AG04450 (cell line): ENCODE measurements at regions of chr19 and their contacts with region 1.

Region 1: DNA sequence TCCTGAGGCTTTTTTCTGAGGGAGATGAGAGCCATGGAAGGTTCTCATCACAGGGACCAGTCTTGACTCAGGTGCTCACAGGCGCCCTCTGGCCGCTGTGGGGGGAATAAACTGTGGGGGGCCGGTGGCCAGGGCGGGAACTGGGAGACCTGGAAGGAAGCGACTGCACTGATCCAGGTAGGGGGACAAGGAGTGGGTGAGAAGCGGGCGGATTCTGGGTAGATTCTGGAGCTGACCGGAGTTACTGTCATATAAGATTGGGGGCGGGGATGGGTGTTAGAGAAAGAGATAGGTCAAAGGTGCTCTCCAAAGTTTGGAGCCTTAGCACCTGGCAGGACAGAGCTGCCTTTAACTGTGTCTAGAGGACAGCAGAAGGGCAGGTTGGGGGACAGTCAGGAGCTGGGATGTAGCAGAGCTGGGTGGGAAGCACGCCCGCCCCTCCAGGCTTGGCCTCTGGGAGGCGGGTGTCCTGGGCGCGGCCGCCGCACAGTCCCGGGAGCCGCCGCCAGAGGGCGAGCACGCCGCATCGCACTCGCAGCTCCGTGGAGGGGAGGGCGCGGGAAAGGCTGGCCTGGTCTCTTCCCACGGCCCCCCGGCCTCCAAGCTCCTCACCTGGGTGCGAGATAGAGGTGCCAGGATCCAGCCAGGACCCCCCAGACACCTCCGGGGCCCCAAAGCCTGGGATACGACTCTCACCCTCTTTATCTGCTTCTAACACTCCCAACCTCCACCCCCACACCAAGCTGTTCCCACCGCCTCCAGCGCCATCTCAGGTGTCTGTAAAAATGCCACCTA is 4.2 kb upstream of the DAND5 start:
- DNase-seq: no peak
- H3K4me3 ChIP-seq: peak overlapping the region; percentile 63
- H3K27ac ChIP-seq: no peak overlapping the region
- H3K27me3 ChIP-seq: no peaks in the 10 kb centered on the region
- CTCF ChIP-seq: peak; percentile 81

Region 2: DNA sequence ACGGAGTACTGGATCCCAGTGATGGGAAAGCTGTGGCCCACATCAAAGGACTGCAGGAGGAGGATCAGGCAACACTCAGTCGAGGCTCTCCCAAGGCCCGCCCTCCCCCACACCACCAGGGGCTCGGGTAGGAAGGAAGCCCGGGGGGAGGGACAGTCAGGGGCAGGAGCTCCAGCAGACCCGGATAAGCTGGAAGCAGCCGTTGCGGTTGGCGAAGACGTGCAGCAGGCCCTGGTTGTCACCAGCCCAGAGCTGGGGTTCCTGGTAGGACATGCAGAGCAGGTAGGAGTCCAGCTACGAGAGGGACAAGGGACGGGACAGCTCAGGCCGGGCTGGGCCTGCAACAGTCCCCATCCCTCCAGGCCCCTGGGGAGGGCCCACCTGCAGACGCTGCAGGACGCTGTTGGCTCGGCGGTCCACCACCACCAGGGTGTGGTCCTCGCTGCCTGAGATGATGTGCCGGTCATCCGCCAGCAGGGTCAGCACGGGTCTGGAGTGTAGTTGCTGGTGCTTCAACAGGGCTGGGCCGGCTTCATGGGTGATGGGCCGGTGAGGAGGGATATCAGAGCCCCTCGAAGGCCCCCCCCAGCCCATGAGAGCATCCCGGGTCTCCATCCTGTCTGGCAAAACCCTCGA is 275.5 kb before region 1 on chr19:
- CTCF ChIA-PET with region 1: no interaction called
- POLR2A ChIA-PET with region 1: no interaction called
- DNase-seq: no peak
- H3K4me3 ChIP-seq: no peak overlapping the region
- H3K27ac ChIP-seq: no peak overlapping the region
- H3K27me3 ChIP-seq: no peaks in the 10 kb centered on the region
- CTCF ChIP-seq: no peak

Region 3: DNA sequence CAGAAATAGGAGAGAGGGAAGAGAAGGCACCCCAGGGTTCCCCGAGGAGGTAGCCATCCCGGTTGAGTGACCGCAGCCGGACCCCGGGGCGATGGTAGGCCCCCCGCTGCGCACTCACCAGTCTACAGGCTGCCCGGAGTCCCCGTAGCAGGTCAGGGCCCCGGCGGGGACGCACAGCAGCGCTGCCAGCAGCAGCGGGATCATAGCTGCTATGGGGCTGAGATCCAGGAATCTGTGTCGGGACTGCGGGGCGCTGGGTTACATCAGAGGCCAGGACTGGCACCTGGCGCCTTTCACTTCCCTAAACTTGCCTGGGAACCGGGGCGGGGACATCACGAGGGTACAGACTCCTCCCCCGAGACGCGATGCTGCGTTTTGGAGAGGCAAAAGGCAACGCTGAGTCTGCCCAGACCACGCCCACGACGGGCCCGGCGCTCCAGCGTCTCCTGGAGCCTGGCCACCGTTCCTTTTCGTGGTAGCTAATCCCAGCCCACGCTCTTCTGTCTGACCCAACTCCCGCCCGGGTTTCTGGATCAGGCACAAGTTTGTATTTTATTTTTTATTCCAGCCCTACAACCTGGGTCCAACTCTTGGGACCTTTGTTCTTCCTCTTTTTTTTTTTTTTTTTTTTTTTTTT is 83.9 kb before region 1 on chr19 and contains the start of gene DNASE2:
- CTCF ChIA-PET with region 1: interaction called, 17 read pairs
- POLR2A ChIA-PET with region 1: no interaction called
- DNase-seq: peak; percentile 76
- H3K4me3 ChIP-seq: peak within 1 kb of the TSS; percentile 82
- H3K27ac ChIP-seq: peak within 1 kb of the TSS; percentile 73
- H3K27me3 ChIP-seq: peaks cover 25% of the 10 kb centered on the region
- CTCF ChIP-seq: no peak
- polyA plus RNA-seq, gene DNASE2: 28.9 and 39.5 TPM in 2 replicates

Region 4: GRCh38 chr19:12983542-12984142 is 18.4 kb after region 1 on chr19:
- CTCF ChIA-PET with region 1: interaction called, 17 read pairs
- POLR2A ChIA-PET with region 1: no interaction called
- DNase-seq: peak; percentile 30
- H3K4me3 ChIP-seq: peak overlapping the region; percentile 50
- H3K27ac ChIP-seq: no peak overlapping the region
- H3K27me3 ChIP-seq: no peaks in the 10 kb centered on the region
- CTCF ChIP-seq: peak; percentile 76

Region 5: GRCh38 chr19:13033819-13034611 is 68.8 kb after region 1 on chr19:
- CTCF ChIA-PET with region 1: interaction called, 11 read pairs
- POLR2A ChIA-PET with region 1: no interaction called
- DNase-seq: no peak
- H3K4me3 ChIP-seq: no peak overlapping the region
- H3K27ac ChIP-seq: peak overlapping the region; percentile 21
- H3K27me3 ChIP-seq: no peaks in the 10 kb centered on the region
- CTCF ChIP-seq: peak; percentile 78

Region 6: DNA sequence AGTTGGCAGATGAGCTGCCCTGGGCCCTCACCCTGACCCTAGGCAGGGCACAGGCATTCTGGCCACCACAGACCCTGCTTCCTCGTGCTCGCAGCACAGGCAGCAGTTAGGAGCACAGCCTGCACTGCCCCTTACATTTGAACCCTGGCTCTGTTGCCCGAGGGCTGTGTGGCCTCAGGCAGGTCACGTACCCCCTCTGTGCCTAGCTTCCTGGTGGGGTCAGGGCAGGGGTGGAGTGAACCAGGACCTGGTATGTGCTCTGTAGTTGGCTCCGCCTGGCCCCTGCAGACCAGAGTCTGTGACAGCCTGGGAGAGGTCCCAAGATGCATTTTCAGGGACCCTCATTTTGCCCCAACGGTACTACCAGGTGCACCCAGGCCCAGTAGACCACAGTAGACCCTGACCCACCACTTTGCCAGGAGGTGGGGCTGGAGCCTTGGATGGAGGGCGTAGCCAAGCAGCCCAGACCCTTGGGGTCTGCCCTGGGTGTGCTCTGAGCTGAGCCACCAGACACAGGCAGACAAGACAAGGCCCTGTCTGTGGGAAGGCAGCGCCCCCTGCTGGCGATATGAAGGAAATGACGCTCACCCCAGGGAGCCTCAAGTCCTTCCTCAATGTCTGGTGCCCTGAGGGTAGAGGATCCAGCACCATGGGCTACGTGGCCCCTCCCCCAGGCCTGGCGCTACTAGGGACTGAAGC is 128.3 kb after region 1 on chr19:
- CTCF ChIA-PET with region 1: interaction called, 33 read pairs
- POLR2A ChIA-PET with region 1: no interaction called
- DNase-seq: peak; percentile 60
- H3K4me3 ChIP-seq: no peak overlapping the region
- H3K27ac ChIP-seq: peak overlapping the region; percentile 21
- H3K27me3 ChIP-seq: no peaks in the 10 kb centered on the region
- CTCF ChIP-seq: peak; percentile 89

Region 7: GRCh38 chr19:13104360-13104847 is 139.2 kb after region 1 on chr19:
- CTCF ChIA-PET with region 1: interaction called, 11 read pairs
- POLR2A ChIA-PET with region 1: no interaction called
- DNase-seq: no peak
- H3K4me3 ChIP-seq: no peak overlapping the region
- H3K27ac ChIP-seq: no peak overlapping the region
- H3K27me3 ChIP-seq: no peaks in the 10 kb centered on the region
- CTCF ChIP-seq: peak; percentile 67

Region 8: GRCh38 chr19:13262450-13262849 is 297.2 kb after region 1 on chr19:
- CTCF ChIA-PET with region 1: interaction called, 12 read pairs
- POLR2A ChIA-PET with region 1: no interaction called
- DNase-seq: no peak
- H3K4me3 ChIP-seq: no peak overlapping the region
- H3K27ac ChIP-seq: no peak overlapping the region
- H3K27me3 ChIP-seq: no peaks in the 10 kb centered on the region
- CTCF ChIP-seq: peak; percentile 62